ENCODE measurements at regions of chr7 and their contacts with region 1.

Region 1: GRCh38 chr7:129091484-129092002 is 36.6 kb upstream of the TNPO3 start:
- DNase-seq: peak; percentile 15
- H3K4me3 ChIP-seq: no peak overlapping the region
- H3K27ac ChIP-seq: no peak overlapping the region
- H3K27me3 ChIP-seq: peaks cover 6% of the 10 kb centered on the region
- CTCF ChIP-seq: peak; percentile 99

Region 2: GRCh38 chr7:128883622-128884501 is 207.7 kb before region 1 on chr7:
- CTCF ChIA-PET with region 1: interaction called, 20 read pairs
- POLR2A ChIA-PET with region 1: no interaction called
- DNase-seq: no peak
- H3K4me3 ChIP-seq: no peak overlapping the region
- H3K27ac ChIP-seq: no peak overlapping the region
- H3K27me3 ChIP-seq: no peaks in the 10 kb centered on the region
- CTCF ChIP-seq: peak; percentile 85

Region 3: DNA sequence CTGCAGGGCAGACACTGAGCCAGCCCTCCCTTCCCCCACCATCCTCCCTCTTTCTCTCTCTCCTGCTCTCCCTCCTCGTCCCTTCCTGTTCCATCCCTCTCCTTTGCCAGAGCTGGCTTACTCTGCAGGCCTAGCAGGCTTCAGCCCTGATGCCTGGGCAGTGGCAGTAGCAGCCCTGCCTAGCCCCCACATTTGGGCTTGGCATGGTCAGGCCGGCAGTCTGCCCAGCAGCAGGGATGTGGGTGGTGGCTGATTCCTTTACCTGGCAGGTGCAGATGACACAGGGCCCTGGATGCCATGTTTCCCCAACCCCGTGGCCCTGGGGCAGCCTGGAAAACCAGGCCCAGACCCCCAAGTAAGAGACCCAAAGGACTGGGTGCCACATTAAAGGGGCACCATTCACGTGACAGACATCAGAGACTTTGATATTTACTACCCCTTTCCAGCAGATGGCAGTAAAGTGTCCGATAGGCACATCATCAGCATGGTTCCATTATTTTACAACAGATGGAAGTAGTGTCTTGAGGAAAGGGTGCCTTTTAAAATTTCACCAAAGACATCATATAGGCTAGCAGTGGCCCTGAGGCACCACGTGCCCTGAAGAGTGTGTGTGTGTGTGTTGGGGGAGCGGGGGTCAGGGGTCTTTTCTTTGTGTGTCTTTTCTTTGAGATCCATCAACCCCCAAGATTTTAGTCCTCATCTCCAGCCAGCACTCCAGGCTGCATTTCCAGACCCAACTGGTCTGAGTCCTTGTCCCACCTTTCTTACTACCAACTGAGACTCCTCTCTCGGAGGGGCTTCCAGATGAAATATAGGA is 187.0 kb before region 1 on chr7:
- CTCF ChIA-PET with region 1: interaction called, 43 read pairs
- POLR2A ChIA-PET with region 1: no interaction called
- DNase-seq: no peak
- H3K4me3 ChIP-seq: no peak overlapping the region
- H3K27ac ChIP-seq: no peak overlapping the region
- H3K27me3 ChIP-seq: peaks cover 18% of the 10 kb centered on the region
- CTCF ChIP-seq: peak; percentile 65

Region 4: DNA sequence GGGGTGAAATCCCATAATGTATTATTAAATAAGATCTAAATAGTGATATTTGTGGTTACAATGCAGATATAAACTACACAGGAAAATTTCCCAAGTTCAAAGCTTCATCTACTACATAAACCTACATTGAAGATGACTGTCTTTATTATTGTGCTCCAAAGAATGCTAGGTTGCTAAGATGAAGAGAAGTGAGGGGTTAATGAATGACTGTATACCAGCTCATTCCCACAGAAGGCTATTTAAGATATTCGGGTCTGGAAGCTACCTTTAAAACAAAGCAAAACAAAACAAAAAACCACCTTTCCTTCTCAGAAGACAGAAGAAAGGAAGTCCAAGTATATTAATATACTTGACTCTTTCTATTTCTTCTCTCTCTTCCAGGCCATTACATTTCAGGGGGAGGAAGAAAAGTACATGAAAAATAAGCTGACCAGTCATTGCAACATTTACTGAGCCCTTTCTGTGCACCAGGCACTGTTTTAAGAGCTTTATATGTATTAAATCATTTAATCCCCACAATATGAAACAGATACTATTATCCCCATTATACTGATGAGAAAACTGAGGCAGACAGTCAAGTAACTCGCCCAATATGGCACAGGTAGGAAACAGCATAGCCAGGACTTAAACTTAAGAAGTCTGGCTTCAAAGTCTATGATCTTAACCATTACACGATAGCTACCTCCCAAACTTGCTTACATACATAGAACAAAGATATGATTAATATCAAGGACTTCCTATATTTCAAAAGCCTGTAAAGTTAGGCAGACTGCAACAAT is 84.7 kb before region 1 on chr7:
- CTCF ChIA-PET with region 1: interaction called, 10 read pairs
- POLR2A ChIA-PET with region 1: no interaction called
- DNase-seq: no peak
- H3K4me3 ChIP-seq: no peak overlapping the region
- H3K27ac ChIP-seq: no peak overlapping the region
- H3K27me3 ChIP-seq: no peaks in the 10 kb centered on the region
- CTCF ChIP-seq: no peak

Region 5: DNA sequence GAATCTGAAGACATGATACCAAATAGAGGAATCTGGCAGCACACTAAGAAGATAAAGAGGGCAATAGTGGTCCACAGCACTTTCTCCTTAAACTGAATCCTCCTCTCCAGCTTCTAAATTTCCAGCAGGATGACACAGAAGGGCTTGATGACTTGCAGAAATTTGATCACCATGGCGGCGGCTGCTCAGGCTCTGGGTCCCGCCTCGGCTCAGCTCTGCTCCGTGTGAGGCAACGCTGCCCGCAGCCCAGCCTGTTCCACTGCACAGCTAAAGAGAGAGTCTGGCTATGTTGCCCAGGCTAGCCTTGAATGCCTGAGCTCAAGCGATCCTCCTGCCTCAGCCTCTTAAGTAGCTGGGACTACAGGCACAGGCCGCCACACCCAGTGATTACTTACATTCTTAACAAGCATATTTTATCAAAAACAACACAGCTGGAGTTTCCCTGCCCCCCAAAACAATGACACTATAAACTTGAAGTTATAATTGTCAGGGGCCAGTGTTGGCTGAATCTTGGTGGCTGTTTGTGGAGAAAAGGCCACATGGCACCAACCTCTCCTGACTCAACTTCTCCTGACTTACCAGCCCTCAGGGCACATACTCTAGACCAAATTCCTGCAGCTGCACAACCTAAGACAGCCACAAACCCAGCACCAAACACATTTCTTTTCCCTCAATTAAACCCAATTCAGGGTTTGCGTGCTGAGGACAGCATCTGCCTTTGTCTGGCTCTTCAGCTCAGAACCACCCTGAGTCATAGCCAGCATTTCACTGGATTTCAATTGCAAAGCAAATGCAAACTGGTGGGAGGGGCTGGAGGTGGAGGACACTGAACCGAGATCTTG is 25.0 kb before region 1 on chr7:
- CTCF ChIA-PET with region 1: interaction called, 26 read pairs
- POLR2A ChIA-PET with region 1: no interaction called
- DNase-seq: peak; percentile 16
- H3K4me3 ChIP-seq: no peak overlapping the region
- H3K27ac ChIP-seq: peak overlapping the region; percentile 34
- H3K27me3 ChIP-seq: peaks cover 20% of the 10 kb centered on the region
- CTCF ChIP-seq: no peak

Region 6: GRCh38 chr7:129101746-129102145 is 10.2 kb after region 1 on chr7:
- CTCF ChIA-PET with region 1: interaction called, 26 read pairs
- POLR2A ChIA-PET with region 1: no interaction called
- DNase-seq: no peak
- H3K4me3 ChIP-seq: no peak overlapping the region
- H3K27ac ChIP-seq: no peak overlapping the region
- H3K27me3 ChIP-seq: peaks cover 25% of the 10 kb centered on the region
- CTCF ChIP-seq: no peak